Heart right ventricle (tissue), 16 donors: ENCODE measurements at regions of chr6 and their contacts with region 1.

Region 1: GRCh38 chr6:156953479-156954146 is 176.4 kb downstream of the ARID1B start:
- DNase-seq: peak in 1 of 2 donors; percentile 68
- ATAC-seq: peak; percentile 62 to 88 (median 79)
- H3K4me3 ChIP-seq: peak overlapping the region in 6 of 10 donors; percentile 6 to 23 (median 14)
- H3K27ac ChIP-seq: peak overlapping the region in 9 of 10 donors; percentile 8 to 75 (median 36)
- H3K4me1 ChIP-seq: peaks cover 15 to 97% (median 87%) of the 10 kb centered on the region in 9 donors
- H3K27me3 ChIP-seq: no peaks in the 10 kb centered on the region
- CTCF ChIP-seq: peak in 7 of 9 donors; percentile 38 to 71 (median 44)

Region 2: GRCh38 chr6:156876302-156876701 is 77.3 kb before region 1 on chr6:
- intact Hi-C with region 1: loop called in 1 of 10 experiments (anchors 10 kb)
- DNase-seq: peak in 1 of 2 donors; percentile 47
- ATAC-seq: peak in 6 of 8 donors; percentile 18 to 63 (median 44)
- H3K4me3 ChIP-seq: no peak overlapping the region
- H3K27ac ChIP-seq: peak overlapping the region in 1 of 10 donors; percentile 17
- H3K4me1 ChIP-seq: peaks cover 2 to 80% (median 55%) of the 10 kb centered on the region in 9 donors
- H3K27me3 ChIP-seq: no peaks in the 10 kb centered on the region
- CTCF ChIP-seq: peak in 8 of 9 donors; percentile 5 to 50 (median 34)

Region 3: DNA sequence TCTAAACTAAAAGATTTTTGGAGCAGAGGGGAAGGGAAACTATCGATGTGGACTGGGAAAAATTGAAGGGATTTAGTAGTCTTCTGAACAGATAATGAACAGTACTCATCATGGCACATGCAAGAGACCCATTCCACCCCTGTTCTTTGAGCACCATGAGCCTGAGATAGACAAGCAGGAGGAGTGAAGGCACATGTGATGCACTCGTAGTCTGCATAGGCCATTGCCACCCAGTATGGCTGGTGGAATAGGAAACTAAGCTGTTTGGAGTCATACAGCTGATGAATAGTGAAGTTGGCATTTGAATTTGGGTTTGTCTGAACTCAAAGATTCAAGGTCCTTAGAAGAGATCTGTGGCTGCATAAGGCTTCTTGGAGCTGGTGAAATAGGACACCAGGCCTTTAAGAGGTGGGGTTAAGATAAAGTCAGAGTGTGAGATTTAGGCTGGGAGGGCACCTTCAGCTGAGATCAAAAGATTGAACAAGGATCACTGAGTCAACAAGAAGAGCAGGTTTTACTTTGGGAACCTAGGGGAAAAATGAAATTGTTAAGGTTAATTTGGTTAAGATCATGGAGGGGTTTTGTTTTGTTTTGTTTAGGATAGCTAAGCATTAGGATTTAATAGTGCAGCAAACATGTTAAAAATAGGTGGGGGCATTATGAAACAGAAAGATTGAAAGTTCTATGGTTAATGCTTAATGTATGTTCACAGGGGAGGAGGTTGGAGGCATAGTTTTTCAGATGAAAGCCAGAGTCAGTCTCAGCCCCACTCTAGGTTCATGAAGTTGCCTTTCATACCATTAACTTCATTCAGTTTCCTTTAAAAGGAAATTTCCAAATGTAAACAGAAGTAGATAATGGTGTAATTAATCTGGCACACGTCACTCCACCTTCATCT is 27.6 kb before region 1 on chr6:
- intact Hi-C with region 1: loop called in 1 of 10 experiments (anchors 2 kb)
- DNase-seq: no peak
- ATAC-seq: no peak
- H3K4me3 ChIP-seq: no peak overlapping the region
- H3K27ac ChIP-seq: no peak overlapping the region
- H3K4me1 ChIP-seq: peaks cover 0 to 42% (median 24%) of the 10 kb centered on the region in 9 donors
- H3K27me3 ChIP-seq: no peaks in the 10 kb centered on the region
- CTCF ChIP-seq: no peak